Gastrocnemius medialis (tissue), 4 donors: ENCODE measurements at regions of chr5 and their contacts with region 1.

Region 1: DNA sequence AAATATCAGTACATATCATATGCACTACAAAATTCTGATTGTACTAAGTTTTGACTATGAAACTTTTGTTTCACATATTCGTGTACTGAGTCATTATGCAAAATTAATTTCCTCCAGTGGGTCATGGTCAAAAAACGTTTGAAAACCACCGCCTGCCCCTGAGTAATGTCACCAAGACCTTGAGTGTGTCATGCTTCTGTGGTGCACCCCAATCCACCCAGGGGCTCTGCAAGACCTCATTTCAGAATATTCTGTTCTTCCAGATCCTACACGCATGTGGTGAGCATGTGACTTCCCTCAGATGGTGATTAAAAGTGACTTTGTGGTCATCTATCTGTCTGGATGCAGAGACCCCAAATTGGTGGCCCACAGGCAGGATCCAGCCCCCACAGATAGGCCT is 31.0 kb downstream of the ABLIM3 start:
- DNase-seq: no peak
- ATAC-seq: no peak
- H3K4me3 ChIP-seq: no peak overlapping the region
- H3K27ac ChIP-seq: peak overlapping the region; percentile 52 to 90 (median 81)
- H3K4me1 ChIP-seq: peaks cover 43 to 53% of the 10 kb centered on the region in 2 donors
- H3K27me3 ChIP-seq: no peaks in the 10 kb centered on the region
- CTCF ChIP-seq: no peak
- POLR2A ChIP-seq: no peak

Region 2: DNA sequence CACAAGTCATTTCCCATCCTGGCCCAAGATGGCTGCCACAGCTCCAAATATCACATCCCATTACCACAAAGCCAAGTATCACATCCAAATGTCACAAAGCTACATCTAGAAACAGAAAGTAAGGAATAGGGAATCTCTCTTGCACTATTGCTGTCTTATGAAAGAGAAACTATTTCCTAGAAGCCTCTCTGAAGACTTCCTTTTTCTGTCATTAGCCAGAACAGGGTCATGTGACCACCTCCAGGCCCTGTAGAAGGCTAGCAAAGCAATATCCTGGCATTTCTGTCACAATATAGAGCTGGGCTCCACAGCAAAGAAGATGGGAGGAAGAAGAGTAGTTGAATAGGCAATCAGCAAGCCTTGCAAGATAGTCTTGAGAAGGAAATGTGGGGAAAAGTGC is 208.6 kb before region 1 on chr5:
- in situ Hi-C with region 1: no loop called
- intact Hi-C with region 1: loop called (anchors 5 kb)
- DNase-seq: no peak
- ATAC-seq: no peak
- H3K4me3 ChIP-seq: no peak overlapping the region
- H3K27ac ChIP-seq: peak overlapping the region; percentile 90 to 96 (median 93)
- H3K4me1 ChIP-seq: peaks cover 24 to 41% of the 10 kb centered on the region in 2 donors
- H3K27me3 ChIP-seq: no peaks in the 10 kb centered on the region
- CTCF ChIP-seq: no peak
- POLR2A ChIP-seq: no peak

Region 3: GRCh38 chr5:149141224-149141956 is 30.9 kb before region 1 on chr5 and contains the start of gene ABLIM3:
- in situ Hi-C with region 1: no loop called
- intact Hi-C with region 1: no loop called
- DNase-seq: peak; percentile 43 to 72
- ATAC-seq: peak; percentile 73 to 82
- H3K4me3 ChIP-seq: peak within 1 kb of the TSS; percentile 87 to 93 (median 91)
- H3K27ac ChIP-seq: peak within 1 kb of the TSS; percentile 86 to 91 (median 88)
- H3K4me1 ChIP-seq: peaks cover 26% of the 10 kb centered on the region in 2 donors
- H3K27me3 ChIP-seq: no peaks in the 10 kb centered on the region
- CTCF ChIP-seq: peak; percentile 85 to 96 (median 96)
- POLR2A ChIP-seq: peak; percentile 36 to 53
- total RNA-seq, gene ABLIM3: 37.5 to 155 (median 67.7) TPM

Region 4: GRCh38 chr5:149240354-149240998 is 68.2 kb after region 1 on chr5:
- in situ Hi-C with region 1: no loop called
- intact Hi-C with region 1: no loop called
- DNase-seq: no peak
- ATAC-seq: no peak
- H3K4me3 ChIP-seq: no peak overlapping the region
- H3K27ac ChIP-seq: no peak overlapping the region
- H3K4me1 ChIP-seq: no peaks in the 10 kb centered on the region
- H3K27me3 ChIP-seq: no peaks in the 10 kb centered on the region
- CTCF ChIP-seq: no peak
- POLR2A ChIP-seq: no peak

Region 5: GRCh38 chr5:149581192-149581861 is 409.1 kb after region 1 on chr5 and contains the start of gene ARHGEF37:
- in situ Hi-C with region 1: loop called in 1 of 4 experiments (anchors 25 kb)
- intact Hi-C with region 1: no loop called
- DNase-seq: peak; percentile 44 to 79
- ATAC-seq: peak; percentile 68 to 86
- H3K4me3 ChIP-seq: peak within 1 kb of the TSS; percentile 65 to 75 (median 69)
- H3K27ac ChIP-seq: peak within 1 kb of the TSS; percentile 78 to 89 (median 80)
- H3K4me1 ChIP-seq: peaks cover 15 to 35% of the 10 kb centered on the region in 2 donors
- H3K27me3 ChIP-seq: no peaks in the 10 kb centered on the region
- CTCF ChIP-seq: peak in 1 of 5 experiments; percentile 13
- POLR2A ChIP-seq: peak; percentile 30 to 48
- total RNA-seq, gene ARHGEF37: 9.5 to 28.6 (median 21.0) TPM